ENCODE measurements at regions of chr2 and their contacts with region 1.

Region 1: DNA sequence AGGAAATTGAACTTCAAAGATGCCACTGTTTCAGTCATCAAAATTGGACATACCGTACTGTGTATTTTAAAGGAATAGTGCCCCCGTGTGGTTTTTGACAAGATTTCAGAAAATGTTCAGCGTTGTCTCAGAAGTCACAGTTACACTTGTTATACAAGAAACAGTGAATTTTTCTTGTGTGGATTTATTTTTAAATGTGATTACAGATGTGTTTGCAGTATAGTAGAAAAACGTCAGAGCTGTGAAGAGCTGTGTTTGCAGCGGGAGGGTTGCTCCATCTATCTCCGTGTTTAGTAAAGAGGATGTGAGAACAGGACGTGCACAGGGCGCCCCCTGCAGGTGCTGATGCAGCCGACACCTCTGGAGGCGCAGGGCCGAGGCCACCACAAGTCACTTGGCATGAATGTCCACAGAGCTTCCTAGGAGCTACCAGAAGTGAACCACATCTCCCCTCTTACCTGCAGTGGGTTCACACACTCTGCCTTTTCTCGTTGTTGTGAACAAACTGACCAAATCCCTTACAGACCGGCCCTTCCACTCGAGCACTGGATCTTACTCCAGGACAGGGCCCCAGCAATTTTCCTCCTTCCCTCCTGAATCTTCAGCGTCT is 73.1 kb downstream of the CACNB4 start:
- DNase-seq: peak; percentile 79 to 87
- H3K4me3 ChIP-seq: no peak overlapping the region
- H3K4me3 Mint-ChIP-seq: peak overlapping the region; percentile 64
- H3K27ac Mint-ChIP-seq: no peak overlapping the region
- H3K4me1 ChIP-seq: no peaks in the 10 kb centered on the region
- H3K4me1 Mint-ChIP-seq: peaks cover 9% of the 10 kb centered on the region
- H3K27me3 ChIP-seq: no peaks in the 10 kb centered on the region
- H3K27me3 Mint-ChIP-seq: peaks cover 6% of the 10 kb centered on the region
- CTCF ChIP-seq: peak; percentile 95 to 98

Region 2: GRCh38 chr2:151478011-151478410 is 547.8 kb before region 1 on chr2:
- CTCF ChIA-PET with region 1: no interaction called
- POLR2A ChIA-PET with region 1: no interaction called
- intact Hi-C with region 1: loop called (anchors 10 kb)
- DNase-seq: no peak
- H3K4me3 ChIP-seq: no peak overlapping the region
- H3K4me3 Mint-ChIP-seq: no peak overlapping the region
- H3K27ac Mint-ChIP-seq: no peak overlapping the region
- H3K4me1 ChIP-seq: no peaks in the 10 kb centered on the region
- H3K4me1 Mint-ChIP-seq: no peaks in the 10 kb centered on the region
- H3K27me3 ChIP-seq: no peaks in the 10 kb centered on the region
- H3K27me3 Mint-ChIP-seq: no peaks in the 10 kb centered on the region
- CTCF ChIP-seq: no peak

Region 3: DNA sequence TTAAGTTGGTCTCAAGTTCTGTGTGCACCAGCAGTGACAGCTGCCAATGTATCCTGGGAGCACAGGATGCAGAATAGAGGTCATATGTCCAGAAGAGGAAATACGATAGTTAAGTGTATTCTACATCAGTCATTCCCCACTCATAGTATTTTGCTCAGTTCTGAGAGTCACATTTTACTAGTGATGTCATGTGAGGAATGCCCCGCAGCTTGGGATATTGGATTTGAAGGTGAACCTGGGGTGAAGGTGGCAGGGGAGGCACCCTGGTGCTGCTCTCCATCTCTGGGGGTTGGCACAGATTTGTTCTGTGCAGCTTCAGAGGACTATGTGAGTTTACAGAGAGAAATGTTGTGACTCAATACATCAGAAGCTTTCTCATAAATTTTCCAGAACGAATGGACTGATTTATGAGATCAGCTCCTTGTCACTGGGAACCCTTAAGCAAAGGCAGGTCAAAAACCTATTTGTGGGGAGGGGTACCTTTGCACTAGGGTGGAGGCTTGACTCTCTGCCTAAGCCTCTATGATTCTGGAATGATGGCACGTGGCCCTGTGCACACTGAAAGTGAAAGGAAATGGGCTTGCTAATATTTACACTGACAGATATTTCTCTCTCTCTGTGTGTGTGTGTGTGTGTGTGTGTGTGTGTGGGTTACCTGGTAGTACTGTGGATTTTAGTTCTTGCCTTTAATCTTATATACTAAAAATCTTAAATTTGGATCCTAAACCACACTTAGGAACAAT is 387.4 kb before region 1 on chr2:
- CTCF ChIA-PET with region 1: interaction called, 7 read pairs
- POLR2A ChIA-PET with region 1: no interaction called
- intact Hi-C with region 1: loop called (anchors 10 kb)
- DNase-seq: peak; percentile 50 to 55
- H3K4me3 ChIP-seq: no peak overlapping the region
- H3K4me3 Mint-ChIP-seq: no peak overlapping the region
- H3K27ac Mint-ChIP-seq: no peak overlapping the region
- H3K4me1 ChIP-seq: no peaks in the 10 kb centered on the region
- H3K4me1 Mint-ChIP-seq: no peaks in the 10 kb centered on the region
- H3K27me3 ChIP-seq: no peaks in the 10 kb centered on the region
- H3K27me3 Mint-ChIP-seq: no peaks in the 10 kb centered on the region
- CTCF ChIP-seq: no peak

Region 4: GRCh38 chr2:151691631-151692030 is 334.2 kb before region 1 on chr2:
- CTCF ChIA-PET with region 1: no interaction called
- POLR2A ChIA-PET with region 1: no interaction called
- intact Hi-C with region 1: loop called (anchors 2 kb)
- DNase-seq: no peak
- H3K4me3 ChIP-seq: no peak overlapping the region
- H3K4me3 Mint-ChIP-seq: no peak overlapping the region
- H3K27ac Mint-ChIP-seq: no peak overlapping the region
- H3K4me1 ChIP-seq: no peaks in the 10 kb centered on the region
- H3K4me1 Mint-ChIP-seq: no peaks in the 10 kb centered on the region
- H3K27me3 ChIP-seq: no peaks in the 10 kb centered on the region
- H3K27me3 Mint-ChIP-seq: no peaks in the 10 kb centered on the region
- CTCF ChIP-seq: no peak

Region 5: DNA sequence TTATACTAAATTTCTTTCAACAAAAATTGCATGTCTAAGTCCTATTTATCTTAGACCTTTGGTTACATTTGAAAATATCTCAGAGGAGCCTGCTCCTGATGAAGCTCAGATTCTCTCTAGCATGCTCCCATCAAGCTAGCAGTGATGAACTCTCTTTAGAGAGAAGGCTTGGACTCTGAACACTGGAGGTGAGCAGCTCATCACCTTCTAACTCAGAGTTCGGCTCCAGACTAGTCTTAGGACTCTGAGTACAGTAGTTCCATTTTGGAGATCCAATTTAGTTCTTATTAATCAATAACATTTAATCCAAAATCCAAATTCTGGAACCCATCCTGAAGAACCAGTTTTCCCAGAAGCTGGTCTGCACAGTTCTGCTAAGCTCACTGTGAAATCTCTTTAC is 34.8 kb before region 1 on chr2:
- CTCF ChIA-PET with region 1: interaction called, 10 read pairs
- POLR2A ChIA-PET with region 1: no interaction called
- intact Hi-C with region 1: loop called (anchors 5 kb)
- DNase-seq: no peak
- H3K4me3 ChIP-seq: no peak overlapping the region
- H3K4me3 Mint-ChIP-seq: no peak overlapping the region
- H3K27ac Mint-ChIP-seq: no peak overlapping the region
- H3K4me1 ChIP-seq: peaks cover 7% of the 10 kb centered on the region; the same call in 1 of the 2 replicates
- H3K4me1 Mint-ChIP-seq: no peaks in the 10 kb centered on the region
- H3K27me3 ChIP-seq: no peaks in the 10 kb centered on the region
- H3K27me3 Mint-ChIP-seq: no peaks in the 10 kb centered on the region
- CTCF ChIP-seq: no peak

Region 6: GRCh38 chr2:152005607-152006006 is 20.2 kb before region 1 on chr2:
- CTCF ChIA-PET with region 1: no interaction called
- POLR2A ChIA-PET with region 1: no interaction called
- intact Hi-C with region 1: loop called (anchors 2 kb)
- DNase-seq: no peak
- H3K4me3 ChIP-seq: no peak overlapping the region
- H3K4me3 Mint-ChIP-seq: no peak overlapping the region
- H3K27ac Mint-ChIP-seq: no peak overlapping the region
- H3K4me1 ChIP-seq: no peaks in the 10 kb centered on the region
- H3K4me1 Mint-ChIP-seq: peaks cover 9% of the 10 kb centered on the region
- H3K27me3 ChIP-seq: no peaks in the 10 kb centered on the region
- H3K27me3 Mint-ChIP-seq: peaks cover 8% of the 10 kb centered on the region
- CTCF ChIP-seq: no peak

Region 7: DNA sequence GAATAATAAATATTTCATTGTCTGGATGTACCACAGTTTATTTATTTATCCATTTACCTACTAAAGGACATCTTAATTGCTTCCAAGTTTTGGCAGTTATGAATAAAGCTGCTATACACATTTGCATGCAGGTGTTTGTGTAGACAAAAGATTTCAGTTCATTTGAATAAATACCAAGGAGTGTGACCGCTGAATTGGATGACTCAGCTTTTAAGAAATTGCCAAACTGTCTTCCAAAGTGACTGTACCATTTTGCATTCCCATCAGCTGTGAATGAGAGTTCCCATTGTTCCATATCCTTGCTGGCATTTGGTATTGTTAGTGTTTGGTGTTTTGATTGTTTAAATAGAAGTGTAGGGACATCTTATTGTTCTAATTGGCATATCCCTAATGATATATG is 273.0 kb after region 1 on chr2:
- CTCF ChIA-PET with region 1: no interaction called
- POLR2A ChIA-PET with region 1: no interaction called
- intact Hi-C with region 1: no loop called
- DNase-seq: no peak
- H3K4me3 ChIP-seq: no peak overlapping the region
- H3K4me3 Mint-ChIP-seq: no peak overlapping the region
- H3K27ac Mint-ChIP-seq: no peak overlapping the region
- H3K4me1 ChIP-seq: no peaks in the 10 kb centered on the region
- H3K4me1 Mint-ChIP-seq: no peaks in the 10 kb centered on the region
- H3K27me3 ChIP-seq: no peaks in the 10 kb centered on the region
- H3K27me3 Mint-ChIP-seq: no peaks in the 10 kb centered on the region
- CTCF ChIP-seq: no peak